ENCODE measurements at regions of chr13 and their contacts with region 1.

Region 1: DNA sequence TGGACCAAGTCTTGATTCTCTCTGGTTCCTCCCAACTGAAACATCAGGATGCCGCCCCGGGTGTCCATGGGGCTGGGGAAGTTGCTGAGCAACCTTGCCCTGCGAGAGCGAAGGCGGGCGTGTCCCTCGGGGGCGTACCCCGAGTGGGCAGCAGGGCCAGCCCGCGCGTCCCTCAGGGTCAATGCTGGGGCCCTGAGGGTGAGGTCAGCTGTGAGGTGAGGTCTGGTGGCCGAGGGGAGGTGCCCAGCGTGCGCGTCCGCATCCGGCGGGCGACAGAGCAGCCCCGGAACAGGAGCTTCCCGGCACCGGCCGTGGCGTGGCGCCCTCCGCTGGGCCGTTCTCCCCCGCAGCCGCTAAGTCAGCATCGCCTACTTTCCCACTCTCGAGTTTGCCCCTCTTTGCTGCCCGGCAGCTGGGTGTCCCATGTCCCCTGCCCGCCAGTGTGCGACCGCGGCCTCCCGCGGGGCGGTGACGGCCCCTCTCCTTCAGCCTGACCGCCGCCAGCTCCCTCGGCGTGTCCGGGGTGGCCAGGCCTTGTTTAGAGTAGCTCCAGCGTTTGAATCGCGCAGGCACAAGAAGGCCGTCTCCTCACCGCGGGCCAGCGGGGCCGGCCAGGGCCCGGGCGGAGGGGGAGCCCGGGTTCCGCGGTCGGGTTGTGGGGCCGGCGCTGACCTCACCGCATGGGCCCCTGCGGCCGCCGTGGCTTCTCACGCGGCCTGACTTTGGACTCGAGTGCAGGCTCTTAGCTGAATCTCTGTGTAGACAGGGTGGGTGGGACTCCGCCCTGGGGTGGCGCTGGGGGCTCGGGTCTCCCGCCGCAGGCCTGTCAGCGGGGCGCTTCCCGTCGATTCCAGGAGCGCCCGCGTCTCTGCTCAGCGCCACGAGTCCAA is 33.0 kb downstream of the GJA3 start:
- DNase-seq: peak; percentile 48
- H3K4me3 ChIP-seq: peak overlapping the region; percentile 63
- H3K27ac ChIP-seq: peak overlapping the region; percentile 23
- H3K4me1 ChIP-seq: peaks cover 7% of the 10 kb centered on the region
- H3K27me3 ChIP-seq: peaks cover 9% of the 10 kb centered on the region
- CTCF ChIP-seq: peak; percentile 68

Region 2: GRCh38 chr13:19978831-19979437 is 148.9 kb before region 1 on chr13:
- CTCF ChIA-PET with region 1: no interaction called
- POLR2A ChIA-PET with region 1: interaction called, 11 read pairs
- intact Hi-C with region 1: no loop called
- DNase-seq: no peak
- H3K4me3 ChIP-seq: no peak overlapping the region
- H3K27ac ChIP-seq: no peak overlapping the region
- H3K4me1 ChIP-seq: no peaks in the 10 kb centered on the region
- H3K27me3 ChIP-seq: no peaks in the 10 kb centered on the region
- CTCF ChIP-seq: no peak

Measured in A673 (cell line).